ENCODE measurements at regions of chr3 and their contacts with region 1.

Region 1: DNA sequence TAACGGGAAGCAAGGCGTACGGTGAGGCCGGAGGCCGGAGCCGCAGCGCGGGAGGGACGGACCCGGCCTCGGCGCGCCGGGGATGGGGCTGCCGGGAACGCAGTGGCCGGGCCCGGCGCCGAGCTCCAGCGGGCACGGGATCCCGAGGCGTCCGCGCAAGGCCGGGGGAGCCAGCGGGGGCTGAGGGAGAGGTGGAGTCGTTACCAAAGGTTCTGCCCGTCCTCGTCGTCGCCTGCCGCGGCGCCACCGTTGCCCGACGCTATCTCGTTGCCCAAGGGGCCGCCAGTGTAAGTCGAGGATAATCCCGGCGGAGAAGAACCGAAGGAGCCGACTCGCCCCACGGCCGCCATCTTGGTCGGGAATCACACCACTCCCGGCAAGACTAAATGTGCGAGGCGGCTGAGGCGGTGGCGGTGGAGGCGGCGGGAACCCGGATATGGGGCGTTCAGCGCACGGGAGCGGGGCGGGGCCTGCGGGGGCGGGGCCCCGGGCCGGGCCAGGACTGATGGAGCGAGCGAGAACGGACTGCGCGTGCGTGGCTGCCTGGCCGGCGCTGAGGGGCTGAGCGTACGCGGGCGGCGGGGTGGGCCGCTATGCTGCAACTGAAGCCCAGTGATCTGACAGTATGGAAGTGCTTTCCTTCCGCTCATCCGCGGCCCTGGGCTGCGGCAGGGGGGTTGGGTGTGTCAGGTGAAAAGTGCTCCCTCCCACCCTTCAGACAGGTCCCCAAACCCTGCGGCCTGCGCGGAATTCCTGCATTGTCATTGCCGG is at the start of gene DYNC1LI1:
- DNase-seq: peak; percentile 94 to 95
- H3K4me3 ChIP-seq: peak within 1 kb of the TSS; percentile 98
- H3K4me3 Mint-ChIP-seq: peak within 1 kb of the TSS; percentile 86
- H3K27ac Mint-ChIP-seq: peak within 1 kb of the TSS; percentile 92
- H3K4me1 ChIP-seq: peaks cover 9% of the 10 kb centered on the region
- H3K4me1 Mint-ChIP-seq: no peaks in the 10 kb centered on the region
- H3K27me3 ChIP-seq: no peaks in the 10 kb centered on the region
- H3K27me3 Mint-ChIP-seq: no peaks in the 10 kb centered on the region
- CTCF ChIP-seq: no peak
- total RNA-seq, gene DYNC1LI1: 32.7 and 35.4 TPM in 2 replicates

Region 2: GRCh38 chr3:32510075-32510724 is 60.4 kb before region 1 on chr3:
- CTCF ChIA-PET with region 1: interaction called, 3 read pairs
- POLR2A ChIA-PET with region 1: interaction called, 3 read pairs
- intact Hi-C with region 1: loop called (anchors 2 kb)
- DNase-seq: peak; percentile 71 to 77
- H3K4me3 ChIP-seq: no peak overlapping the region
- H3K4me3 Mint-ChIP-seq: no peak overlapping the region
- H3K27ac Mint-ChIP-seq: no peak overlapping the region
- H3K4me1 ChIP-seq: no peaks in the 10 kb centered on the region
- H3K4me1 Mint-ChIP-seq: no peaks in the 10 kb centered on the region
- H3K27me3 ChIP-seq: no peaks in the 10 kb centered on the region
- H3K27me3 Mint-ChIP-seq: no peaks in the 10 kb centered on the region
- CTCF ChIP-seq: peak; percentile 63 to 77

Region 3: DNA sequence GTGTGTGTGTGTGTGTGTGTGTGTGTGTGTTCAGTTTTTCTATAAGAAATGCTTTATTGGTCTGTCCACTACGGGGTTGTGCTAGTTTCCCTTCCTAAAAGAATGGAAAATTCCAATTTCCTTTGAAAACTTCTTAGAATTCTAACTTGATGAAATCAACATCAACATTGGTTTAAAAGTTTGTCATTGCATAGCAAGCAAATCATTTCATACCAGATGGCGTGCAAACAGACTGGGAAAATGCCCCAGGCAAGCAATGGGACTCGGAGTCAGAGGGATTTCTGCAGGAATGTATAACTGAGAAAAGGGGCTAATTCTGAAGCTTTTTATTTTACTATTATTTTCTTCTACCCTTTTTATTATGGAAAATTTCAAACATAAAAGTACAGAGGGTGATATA is 13.1 kb after region 1 on chr3:
- CTCF ChIA-PET with region 1: no interaction called
- POLR2A ChIA-PET with region 1: no interaction called
- intact Hi-C with region 1: loop called (anchors 2 kb)
- DNase-seq: no peak
- H3K4me3 ChIP-seq: no peak overlapping the region
- H3K4me3 Mint-ChIP-seq: no peak overlapping the region
- H3K27ac Mint-ChIP-seq: no peak overlapping the region
- H3K4me1 ChIP-seq: peaks cover 9% of the 10 kb centered on the region; the same call in 1 of the 2 replicates
- H3K4me1 Mint-ChIP-seq: no peaks in the 10 kb centered on the region
- H3K27me3 ChIP-seq: no peaks in the 10 kb centered on the region
- H3K27me3 Mint-ChIP-seq: no peaks in the 10 kb centered on the region
- CTCF ChIP-seq: no peak

Region 4: GRCh38 chr3:32684800-32685542 is 114.4 kb after region 1 on chr3 and contains the start of gene CNOT10:
- CTCF ChIA-PET with region 1: no interaction called
- POLR2A ChIA-PET with region 1: no interaction called
- intact Hi-C with region 1: loop called (anchors 1 kb)
- DNase-seq: peak; percentile 94 to 95
- H3K4me3 ChIP-seq: peak within 1 kb of the TSS; percentile 63
- H3K4me3 Mint-ChIP-seq: peak within 1 kb of the TSS; percentile 86
- H3K27ac Mint-ChIP-seq: peak within 1 kb of the TSS; percentile 82
- H3K4me1 ChIP-seq: peaks cover 11% of the 10 kb centered on the region; the same call in 1 of the 2 replicates
- H3K4me1 Mint-ChIP-seq: peaks cover 14% of the 10 kb centered on the region
- H3K27me3 ChIP-seq: no peaks in the 10 kb centered on the region
- H3K27me3 Mint-ChIP-seq: no peaks in the 10 kb centered on the region
- CTCF ChIP-seq: peak in 1 of 2 experiments; percentile 52
- total RNA-seq, gene CNOT10: 37.2 and 49.5 TPM in 2 replicates

Measured in Caco-2 (cell line).